ENCODE measurements at regions of chr3 and their contacts with region 1.

Region 1: DNA sequence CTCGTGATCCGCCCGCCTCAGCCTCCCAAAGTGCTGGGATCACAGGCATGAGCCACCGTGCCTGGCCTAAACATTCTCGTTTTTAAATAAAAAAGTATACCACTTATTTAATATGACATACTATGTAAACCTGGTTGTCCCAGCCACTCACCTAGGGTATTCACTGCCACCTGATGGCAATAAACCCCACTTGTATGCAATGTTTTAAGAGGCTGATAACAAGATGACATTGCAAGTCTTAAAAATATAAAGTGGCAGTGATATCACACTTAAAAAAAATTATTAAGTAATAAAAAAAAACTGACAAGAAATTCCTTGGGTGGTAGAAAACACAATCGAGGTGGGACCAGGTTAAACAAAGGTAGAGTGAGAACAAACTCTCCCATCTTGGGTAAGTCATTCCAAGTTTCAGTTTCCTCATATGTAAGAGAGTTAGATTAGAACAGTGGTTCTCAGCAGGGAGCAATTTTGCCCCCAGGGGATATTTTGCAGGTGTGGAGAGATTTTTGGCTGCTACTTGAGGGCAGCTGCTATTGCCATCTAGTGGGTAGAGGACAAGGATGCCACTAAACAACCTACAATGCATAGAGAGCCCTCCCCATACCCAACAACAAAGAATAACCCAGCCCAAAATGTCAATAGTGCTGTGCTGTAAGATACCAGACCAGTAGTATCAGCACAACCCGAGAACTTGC is 14.5 kb downstream of the ARF4 start:
- DNase-seq: peak; percentile 88 to 96
- H3K4me3 ChIP-seq: no peak overlapping the region
- H3K27ac ChIP-seq: peak overlapping the region; percentile 91
- H3K4me1 ChIP-seq: peaks cover 24% of the 10 kb centered on the region
- H3K27me3 ChIP-seq: no peaks in the 10 kb centered on the region
- CTCF ChIP-seq: peak; percentile 62; the same call in 1 of the 2 replicates

Region 2: DNA sequence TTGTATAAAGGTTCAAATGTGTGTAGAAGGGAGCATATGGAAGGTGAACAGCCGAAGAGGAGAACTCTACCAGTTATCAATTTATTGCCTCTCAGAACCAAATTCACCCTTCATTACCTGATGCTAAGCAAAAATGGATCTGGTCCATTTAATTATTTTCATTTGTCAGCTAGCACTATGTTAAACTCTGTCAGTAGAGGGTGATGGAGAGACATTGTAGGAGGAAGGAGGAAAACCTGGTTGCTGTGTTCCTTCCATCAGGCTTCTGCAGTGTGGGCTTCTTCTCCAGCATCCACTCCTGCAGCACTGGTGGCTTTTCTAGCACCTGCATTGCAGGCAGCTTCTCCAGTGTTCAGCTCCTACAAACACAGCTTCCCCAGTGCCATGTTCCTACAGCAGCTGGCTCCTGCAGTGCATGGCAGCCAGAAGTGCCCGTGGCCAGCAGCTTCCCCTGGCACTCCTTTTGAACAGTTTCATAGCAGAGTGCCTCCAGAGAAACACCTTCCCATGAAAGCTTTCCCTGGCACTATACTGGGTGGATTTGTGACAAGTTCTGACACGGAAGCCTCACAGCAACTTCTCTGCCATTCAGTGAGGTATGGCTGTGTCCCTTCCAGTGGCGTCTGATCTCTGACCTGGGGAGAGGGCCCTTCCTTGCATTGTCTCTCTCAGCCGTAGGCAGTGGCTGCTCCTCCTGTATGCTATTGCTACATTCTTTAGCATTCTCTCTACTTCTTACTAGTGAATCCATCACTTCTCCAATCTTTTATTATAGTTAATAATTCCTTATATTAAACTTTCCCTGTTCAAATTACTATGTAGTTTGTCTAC is 402.8 kb before region 1 on chr3:
- CTCF ChIA-PET with region 1: no interaction called
- POLR2A ChIA-PET with region 1: no interaction called
- intact Hi-C with region 1: loop called (anchors 2 kb)
- DNase-seq: no peak
- H3K4me3 ChIP-seq: no peak overlapping the region
- H3K27ac ChIP-seq: no peak overlapping the region
- H3K4me1 ChIP-seq: no peaks in the 10 kb centered on the region
- H3K27me3 ChIP-seq: no peaks in the 10 kb centered on the region
- CTCF ChIP-seq: peak; percentile 50

Region 3: DNA sequence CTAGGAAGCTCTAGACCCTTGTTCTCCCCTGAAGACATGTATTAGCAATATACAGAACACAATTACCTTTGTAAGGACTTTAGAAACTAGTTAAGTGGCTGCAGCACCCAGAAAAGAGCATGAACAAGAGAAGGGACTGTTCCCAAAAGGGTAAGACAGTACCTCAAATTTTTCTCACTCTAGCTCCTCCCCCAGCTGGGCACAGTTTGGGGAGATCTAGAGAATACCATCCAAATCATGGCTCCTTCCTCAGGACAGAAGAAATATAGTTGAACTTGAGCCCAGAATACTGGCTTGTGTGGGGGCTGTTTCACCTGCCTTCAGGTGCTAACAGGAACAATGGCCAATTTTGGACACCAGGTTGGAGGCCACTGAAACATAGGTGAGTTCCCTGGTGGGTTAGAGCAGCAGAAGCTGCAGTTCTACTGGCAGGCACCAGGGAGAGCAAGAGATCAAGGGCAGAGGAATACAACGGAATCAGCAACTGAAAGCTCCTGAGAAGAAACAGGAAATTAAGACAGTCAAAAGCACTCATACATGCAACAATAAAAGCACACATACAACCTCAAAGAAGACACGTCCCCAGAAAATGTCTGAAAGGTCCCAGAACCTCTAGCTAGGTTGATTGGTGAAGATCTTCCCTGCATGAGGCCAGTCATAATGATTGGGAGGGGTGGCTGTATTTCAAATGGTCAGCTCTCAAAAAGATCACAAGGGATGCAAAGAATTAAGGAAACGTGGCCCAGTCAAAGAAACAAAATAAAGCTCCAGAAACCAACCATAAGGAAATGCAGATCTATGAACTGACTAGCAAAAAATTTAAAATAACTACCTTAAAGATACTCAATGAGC is 185.2 kb before region 1 on chr3:
- CTCF ChIA-PET with region 1: interaction called, 5 read pairs
- POLR2A ChIA-PET with region 1: no interaction called
- intact Hi-C with region 1: loop called (anchors 1 kb)
- DNase-seq: peak; percentile 58 to 61
- H3K4me3 ChIP-seq: no peak overlapping the region
- H3K27ac ChIP-seq: no peak overlapping the region
- H3K4me1 ChIP-seq: no peaks in the 10 kb centered on the region
- H3K27me3 ChIP-seq: no peaks in the 10 kb centered on the region
- CTCF ChIP-seq: peak; percentile 86

Region 4: GRCh38 chr3:57815036-57815435 is 232.4 kb after region 1 on chr3:
- CTCF ChIA-PET with region 1: interaction called, 10 read pairs
- POLR2A ChIA-PET with region 1: no interaction called
- intact Hi-C with region 1: no loop called
- DNase-seq: no peak
- H3K4me3 ChIP-seq: no peak overlapping the region
- H3K27ac ChIP-seq: no peak overlapping the region
- H3K4me1 ChIP-seq: no peaks in the 10 kb centered on the region
- H3K27me3 ChIP-seq: no peaks in the 10 kb centered on the region
- CTCF ChIP-seq: no peak

Region 5: GRCh38 chr3:58073301-58074108 is 490.9 kb after region 1 on chr3:
- CTCF ChIA-PET with region 1: no interaction called
- POLR2A ChIA-PET with region 1: no interaction called
- intact Hi-C with region 1: no loop called
- DNase-seq: no peak
- H3K4me3 ChIP-seq: no peak overlapping the region
- H3K27ac ChIP-seq: no peak overlapping the region
- H3K4me1 ChIP-seq: no peaks in the 10 kb centered on the region
- H3K27me3 ChIP-seq: no peaks in the 10 kb centered on the region
- CTCF ChIP-seq: no peak

Measured in PC-9 (cell line).